ENCODE measurements at regions of chr19 and their contacts with region 1.

Region 1: DNA sequence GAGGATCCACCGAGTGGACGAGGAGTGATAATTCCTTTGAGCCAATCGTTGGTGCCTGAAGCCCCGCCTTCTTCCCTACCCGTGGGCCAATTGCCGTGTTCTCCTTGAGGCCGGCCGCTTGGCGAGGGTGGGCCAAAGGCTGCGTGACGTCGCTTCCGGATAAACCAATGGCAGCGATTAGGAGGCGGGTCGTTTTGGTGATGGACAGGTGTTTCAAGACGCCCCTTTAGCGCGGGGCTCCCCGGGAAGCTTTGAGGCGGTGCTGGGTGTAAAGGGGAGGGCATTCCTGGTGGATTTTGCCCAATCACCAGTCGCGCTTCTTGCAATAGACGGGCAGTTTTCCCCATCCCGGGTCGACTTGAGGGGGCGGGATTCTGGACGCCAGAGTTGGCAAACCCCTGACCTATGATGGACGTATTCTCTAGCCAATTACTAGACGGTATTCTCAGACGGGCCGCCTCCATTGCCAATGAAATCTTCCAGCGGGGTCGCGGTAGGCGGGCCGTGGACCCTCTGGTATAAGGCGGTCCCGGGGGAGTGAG is 310 bp upstream of the PRMT1 start:
- DNase-seq: peak; percentile 100
- ATAC-seq: peak; percentile 58 to 81
- H3K4me3 ChIP-seq: peak overlapping the region; percentile 82
- H3K27ac ChIP-seq: peak overlapping the region; percentile 97 to 99
- H3K4me1 ChIP-seq: peaks cover 38% of the 10 kb centered on the region
- CTCF ChIP-seq: no peak
- EP300 ChIP-seq: no peak
- POLR2A ChIP-seq: no peak
- RAD21 ChIP-seq: no peak

Region 2: DNA sequence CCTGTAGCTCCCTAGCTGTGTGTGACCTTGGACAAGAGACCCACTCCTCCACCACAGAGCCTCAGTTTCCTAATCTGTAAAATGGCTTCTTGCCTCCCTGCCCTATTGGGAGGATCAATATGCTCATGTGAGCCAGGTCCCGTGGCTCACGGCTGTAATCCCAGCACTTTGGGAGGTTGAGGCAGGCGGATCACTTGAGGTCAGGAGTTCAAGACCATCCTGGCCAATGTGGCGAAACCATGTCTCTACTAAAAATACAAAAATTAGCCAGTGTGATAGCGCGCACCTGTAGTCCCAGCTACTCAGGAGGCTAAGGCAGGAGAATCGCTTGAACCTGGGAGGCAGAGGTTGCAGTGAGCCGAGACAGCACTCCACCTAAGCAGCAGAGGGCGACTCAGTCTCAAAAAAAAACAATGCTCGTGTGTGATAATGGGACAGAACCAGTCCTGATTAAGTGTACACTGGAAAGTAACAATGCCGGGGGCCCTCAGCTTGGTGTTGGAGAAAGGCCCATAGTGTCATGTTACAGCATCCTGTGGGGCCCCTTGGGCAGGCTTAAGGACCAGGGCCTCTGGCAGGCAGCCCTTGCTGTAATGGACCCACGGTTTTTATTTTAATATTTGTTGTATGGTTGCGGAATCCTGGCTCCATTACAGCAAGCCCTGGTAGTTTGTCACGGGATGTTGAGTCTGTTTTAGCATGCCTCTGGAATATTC is 173.7 kb before region 1 on chr19:
- CTCF ChIA-PET with region 1: interaction called, 20 read pairs
- POLR2A ChIA-PET with region 1: interaction called, 3 read pairs
- DNase-seq: peak; percentile 69 to 79
- ATAC-seq: peak; percentile 61 to 71
- H3K4me3 ChIP-seq: no peak overlapping the region
- H3K27ac ChIP-seq: no peak overlapping the region
- H3K4me1 ChIP-seq: peaks cover 24% of the 10 kb centered on the region
- CTCF ChIP-seq: peak; percentile 88
- EP300 ChIP-seq: no peak
- POLR2A ChIP-seq: no peak
- RAD21 ChIP-seq: peak; percentile 86 to 88

Region 3: GRCh38 chr19:49595819-49596404 is 80.8 kb before region 1 on chr19:
- CTCF ChIA-PET with region 1: interaction called, 13 read pairs
- POLR2A ChIA-PET with region 1: interaction called, 8 read pairs
- DNase-seq: no peak
- ATAC-seq: no peak
- H3K4me3 ChIP-seq: no peak overlapping the region
- H3K27ac ChIP-seq: no peak overlapping the region
- H3K4me1 ChIP-seq: peaks cover 7% of the 10 kb centered on the region
- CTCF ChIP-seq: no peak
- EP300 ChIP-seq: no peak
- POLR2A ChIP-seq: no peak
- RAD21 ChIP-seq: no peak

Region 4: GRCh38 chr19:49640113-49640898 is 36.5 kb before region 1 on chr19 and contains the start of gene RRAS:
- CTCF ChIA-PET with region 1: interaction called, 134 read pairs
- POLR2A ChIA-PET with region 1: interaction called, 48 read pairs
- DNase-seq: peak; percentile 99 to 100
- ATAC-seq: peak; percentile 62 to 76
- H3K4me3 ChIP-seq: peak within 1 kb of the TSS; percentile 94
- H3K27ac ChIP-seq: peak within 1 kb of the TSS; percentile 97 to 99
- H3K4me1 ChIP-seq: peaks cover 37% of the 10 kb centered on the region
- CTCF ChIP-seq: no peak
- EP300 ChIP-seq: peak; percentile 13 to 42; a peak in 1 of 5 replicates
- POLR2A ChIP-seq: no peak; the same call in none of the 2 replicates
- RAD21 ChIP-seq: no peak; a peak in 1 of 5 replicates
- polyA plus RNA-seq, gene RRAS: 45.9 and 47.6 TPM in 2 replicates

Region 5: DNA sequence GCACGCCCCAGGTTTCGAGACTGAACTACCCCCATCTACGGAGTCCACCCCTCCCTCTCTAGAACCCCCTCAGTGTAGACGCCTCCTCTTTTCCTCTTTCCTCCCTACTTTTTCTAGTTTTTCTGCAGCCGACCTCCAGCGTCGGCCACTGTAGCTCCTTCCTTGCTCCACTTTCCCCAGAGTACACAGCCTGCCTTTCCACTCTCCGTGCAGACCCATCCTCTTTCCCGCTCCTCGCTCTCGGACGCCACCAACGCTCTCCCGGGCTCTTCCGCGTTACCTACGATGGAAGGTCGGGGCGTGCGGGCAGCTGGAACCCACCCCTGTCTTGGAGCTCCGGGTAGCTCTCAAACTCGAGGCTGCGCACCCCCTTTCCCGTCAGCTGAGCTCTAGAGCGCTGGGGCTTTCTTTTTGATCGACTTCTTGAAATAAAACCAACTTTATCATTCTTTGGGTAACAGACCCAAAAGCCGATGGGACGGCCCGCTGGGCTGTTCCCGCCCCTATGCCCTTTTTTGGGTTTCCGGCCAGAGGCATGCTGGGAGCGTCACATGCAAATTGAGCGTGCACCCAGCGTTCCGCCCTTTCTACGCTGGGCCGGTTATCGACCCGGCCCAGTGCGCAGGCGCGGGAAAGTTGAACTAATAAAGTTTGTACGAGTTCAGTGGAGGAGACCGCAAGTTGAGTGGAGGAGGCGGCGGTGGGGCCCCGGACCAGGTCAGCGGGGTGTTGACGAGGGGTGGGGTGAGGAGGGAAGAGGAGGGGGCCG is 11.2 kb before region 1 on chr19 and contains the starts of genes BCL2L12 and IRF3:
- CTCF ChIA-PET with region 1: interaction called, 326 read pairs
- POLR2A ChIA-PET with region 1: interaction called, 41 read pairs
- DNase-seq: peak; percentile 96 to 98
- ATAC-seq: peak; percentile 75 to 87
- H3K4me3 ChIP-seq: peak within 1 kb of the TSS; percentile 65
- H3K27ac ChIP-seq: peak within 1 kb of the TSS; percentile 79 to 86
- H3K4me1 ChIP-seq: peaks cover 14% of the 10 kb centered on the region
- CTCF ChIP-seq: no peak
- EP300 ChIP-seq: peak in 1 of 2 experiments; percentile 19; a peak in 1 of 5 replicates
- POLR2A ChIP-seq: peak; percentile 45
- RAD21 ChIP-seq: no peak
- polyA plus RNA-seq, gene BCL2L12: 26.6 and 29.2 TPM in 2 replicates
- polyA plus RNA-seq, gene IRF3: 54.0 and 68.6 TPM in 2 replicates

Region 6: GRCh38 chr19:49700563-49700962 is 23.8 kb after region 1 on chr19:
- CTCF ChIA-PET with region 1: interaction called, 16 read pairs
- POLR2A ChIA-PET with region 1: no interaction called
- DNase-seq: no peak
- ATAC-seq: peak; percentile 48 to 62; a peak in 4 of 6 replicates
- H3K4me3 ChIP-seq: no peak overlapping the region
- H3K27ac ChIP-seq: no peak overlapping the region
- H3K4me1 ChIP-seq: peaks cover 6% of the 10 kb centered on the region; the same call in 1 of the 3 replicates
- CTCF ChIP-seq: no peak
- EP300 ChIP-seq: no peak
- POLR2A ChIP-seq: no peak
- RAD21 ChIP-seq: no peak